AG04450 (cell line): ENCODE measurements at regions of chr6 and their contacts with region 1.

Region 1: GRCh38 chr6:109382576-109383437 is 540 bp upstream of the CD164 start:
- DNase-seq: peak; percentile 87
- H3K4me3 ChIP-seq: peak overlapping the region; percentile 98
- H3K27ac ChIP-seq: peak overlapping the region; percentile 99
- H3K27me3 ChIP-seq: peaks cover 3% of the 10 kb centered on the region
- CTCF ChIP-seq: peak; percentile 53

Region 2: GRCh38 chr6:108921547-108922361 is 461.1 kb before region 1 on chr6:
- CTCF ChIA-PET with region 1: no interaction called
- POLR2A ChIA-PET with region 1: no interaction called
- DNase-seq: no peak
- H3K4me3 ChIP-seq: no peak overlapping the region
- H3K27ac ChIP-seq: no peak overlapping the region
- H3K27me3 ChIP-seq: peaks cover 3% of the 10 kb centered on the region
- CTCF ChIP-seq: no peak

Region 3: GRCh38 chr6:109095027-109095834 is 287.6 kb before region 1 on chr6 and contains the start of gene CEP57L1:
- CTCF ChIA-PET with region 1: no interaction called
- POLR2A ChIA-PET with region 1: interaction called, 22 read pairs
- DNase-seq: peak; percentile 90
- H3K4me3 ChIP-seq: peak within 1 kb of the TSS; percentile 93
- H3K27ac ChIP-seq: peak within 1 kb of the TSS; percentile 97
- H3K27me3 ChIP-seq: no peaks in the 10 kb centered on the region
- CTCF ChIP-seq: 0 out of 2 replicates have a peak, but pooled peaks have one; percentile 14
- polyA plus RNA-seq, gene CEP57L1: 16.5 and 21.2 TPM in 2 replicates

Region 4: GRCh38 chr6:109397020-109397419 is 14.2 kb after region 1 on chr6:
- CTCF ChIA-PET with region 1: interaction called, 13 read pairs
- POLR2A ChIA-PET with region 1: interaction called, 4 read pairs
- DNase-seq: no peak
- H3K4me3 ChIP-seq: no peak overlapping the region
- H3K27ac ChIP-seq: no peak overlapping the region
- H3K27me3 ChIP-seq: peaks cover 7% of the 10 kb centered on the region
- CTCF ChIP-seq: peak; percentile 64

Region 5: DNA sequence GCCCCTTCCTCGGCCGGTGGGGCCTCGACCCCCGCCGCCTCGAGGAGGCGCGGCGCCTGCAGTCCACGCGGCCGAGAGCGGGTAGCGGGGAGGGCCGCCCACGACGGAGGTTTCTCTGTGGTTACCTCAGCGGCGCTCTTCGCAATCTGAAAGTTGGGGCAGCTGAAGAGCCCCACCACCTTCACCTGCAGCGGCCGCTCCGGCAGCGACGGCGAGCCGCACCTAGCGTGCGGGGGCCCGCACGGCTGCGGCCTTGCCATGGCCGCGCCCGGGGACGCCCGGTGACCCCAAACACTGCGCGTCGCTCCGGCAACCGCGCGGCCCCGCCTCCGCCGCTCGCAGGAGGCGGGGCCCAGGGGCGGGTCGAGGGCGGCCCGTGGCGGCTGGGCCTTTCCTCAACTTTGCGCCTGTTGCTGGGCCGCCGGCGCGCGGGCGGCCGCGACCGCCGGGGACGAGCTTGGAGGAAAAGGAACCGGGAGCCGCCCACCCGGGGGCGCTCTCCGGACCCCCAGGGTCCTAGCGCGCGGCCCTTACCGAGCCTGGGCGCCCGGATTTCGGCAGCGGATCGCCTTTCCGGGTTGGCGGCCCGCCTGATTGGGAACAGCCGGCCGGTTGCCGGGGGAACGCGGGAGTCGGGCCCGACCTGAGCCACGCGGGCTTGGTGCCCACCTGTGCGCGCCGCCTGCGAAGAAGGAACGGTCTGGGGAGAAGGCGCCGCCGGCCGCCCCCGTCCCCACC is 57.7 kb after region 1 on chr6 and contains the starts of genes PPIL6 and SMPD2:
- CTCF ChIA-PET with region 1: interaction called, 6 read pairs
- POLR2A ChIA-PET with region 1: interaction called, 16 read pairs
- DNase-seq: peak; percentile 58
- H3K4me3 ChIP-seq: peak within 1 kb of the TSS; percentile 83
- H3K27ac ChIP-seq: peak within 1 kb of the TSS; percentile 79
- H3K27me3 ChIP-seq: no peaks in the 10 kb centered on the region
- CTCF ChIP-seq: peak; percentile 33
- polyA plus RNA-seq, gene PPIL6: 0.71 and 0.83 TPM in 2 replicates
- polyA plus RNA-seq, gene SMPD2: 4.5 and 5.4 TPM in 2 replicates